HCT116 (cell line): ENCODE measurements at regions of chr4 and their contacts with region 1.

Region 1: GRCh38 chr4:6327041-6327917 is 57.6 kb downstream of the WFS1 start:
- DNase-seq: peak; percentile 48
- ATAC-seq: peak; percentile 84
- H3K4me3 ChIP-seq: no peak overlapping the region
- H3K27ac ChIP-seq: no peak overlapping the region
- H3K4me1 ChIP-seq: peaks cover 8 to 16% of the 10 kb centered on the region in 2 experiments
- H3K27me3 ChIP-seq: no peaks in the 10 kb centered on the region
- CTCF ChIP-seq: peak; percentile 87 to 90 (median 87)
- POLR2A ChIP-seq: no peak
- RAD21 ChIP-seq: peak; percentile 96

Region 2: GRCh38 chr4:5998333-5998936 is 328.8 kb before region 1 on chr4:
- CTCF ChIA-PET with region 1: interaction called, 12 read pairs
- POLR2A ChIA-PET with region 1: no interaction called
- RAD21 ChIA-PET with region 1: no interaction called
- intact Hi-C with region 1: loop called (anchors 1 kb)
- DNase-seq: peak; percentile 45
- ATAC-seq: peak; percentile 92
- H3K4me3 ChIP-seq: no peak overlapping the region
- H3K27ac ChIP-seq: no peak overlapping the region
- H3K4me1 ChIP-seq: peaks cover 0 to 7% of the 10 kb centered on the region in 2 experiments; a peak in 1 of 4 replicates
- H3K27me3 ChIP-seq: peaks cover 41% of the 10 kb centered on the region
- CTCF ChIP-seq: peak; percentile 97 to 99 (median 98)
- POLR2A ChIP-seq: no peak
- RAD21 ChIP-seq: peak; percentile 87

Region 3: DNA sequence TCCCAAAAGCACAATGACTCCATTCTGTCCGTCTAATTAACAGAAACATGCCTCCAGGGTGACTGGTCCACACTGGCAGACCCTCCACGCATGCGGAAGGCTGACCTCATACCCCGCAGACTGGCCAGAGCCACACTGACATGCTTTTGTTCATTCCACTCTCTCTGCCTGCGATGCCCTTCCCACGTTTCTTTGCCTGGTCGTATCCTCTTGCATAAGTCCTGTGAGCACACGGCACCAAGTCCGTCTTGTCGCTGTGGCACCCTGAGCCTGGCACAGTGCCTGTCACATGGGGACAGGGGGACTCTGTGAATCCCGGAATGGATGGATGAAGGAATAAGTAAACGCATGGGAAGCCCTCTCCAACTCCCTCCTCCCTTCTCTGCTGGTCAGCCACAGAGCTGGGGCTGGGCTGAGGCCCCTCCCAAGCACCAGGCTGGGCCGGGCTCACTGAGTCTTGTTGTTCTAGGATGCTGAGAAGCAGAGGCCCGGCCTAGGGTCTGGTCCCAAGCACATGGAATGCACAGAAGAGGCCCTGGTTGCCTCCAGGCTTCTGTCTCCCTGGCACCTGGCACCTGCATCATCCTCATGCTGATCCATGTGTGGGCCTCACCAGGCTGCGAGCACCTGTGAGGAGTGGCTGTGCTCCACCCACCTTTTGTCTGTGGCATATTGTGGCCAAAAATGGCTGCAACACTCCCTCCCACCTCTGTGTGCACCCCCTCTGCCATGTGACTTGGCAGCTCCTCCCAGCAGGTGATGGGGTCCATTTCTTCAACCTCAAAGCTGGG is 270.1 kb before region 1 on chr4:
- CTCF ChIA-PET with region 1: no interaction called
- POLR2A ChIA-PET with region 1: no interaction called
- RAD21 ChIA-PET with region 1: no interaction called
- intact Hi-C with region 1: no loop called
- DNase-seq: no peak
- ATAC-seq: no peak
- H3K4me3 ChIP-seq: no peak overlapping the region
- H3K27ac ChIP-seq: no peak overlapping the region
- H3K4me1 ChIP-seq: peaks cover 0 to 5% of the 10 kb centered on the region in 2 experiments; a peak in 2 of 4 replicates
- H3K27me3 ChIP-seq: peaks cover 8% of the 10 kb centered on the region; the same call in 1 of the 2 replicates
- CTCF ChIP-seq: no peak
- POLR2A ChIP-seq: no peak
- RAD21 ChIP-seq: no peak

Region 4: GRCh38 chr4:6250235-6250983 is 76.9 kb before region 1 on chr4:
- CTCF ChIA-PET with region 1: interaction called, 201 read pairs
- POLR2A ChIA-PET with region 1: no interaction called
- RAD21 ChIA-PET with region 1: interaction called, 20 to 26 read pairs
- intact Hi-C with region 1: loop called (anchors 1 kb)
- DNase-seq: peak; percentile 76
- ATAC-seq: peak; percentile 93
- H3K4me3 ChIP-seq: peak overlapping the region; percentile 30 to 44
- H3K27ac ChIP-seq: no peak overlapping the region
- H3K4me1 ChIP-seq: peaks cover 3 to 6% of the 10 kb centered on the region in 2 experiments; a peak in 3 of 4 replicates
- H3K27me3 ChIP-seq: no peaks in the 10 kb centered on the region
- CTCF ChIP-seq: peak; percentile 55 to 92 (median 85); a peak in 5 of 6 replicates
- POLR2A ChIP-seq: no peak
- RAD21 ChIP-seq: peak; percentile 83

Region 5: GRCh38 chr4:6343950-6344408 is 16.7 kb after region 1 on chr4:
- CTCF ChIA-PET with region 1: interaction called, 20 read pairs
- POLR2A ChIA-PET with region 1: no interaction called
- RAD21 ChIA-PET with region 1: no interaction called
- intact Hi-C with region 1: no loop called
- DNase-seq: peak; percentile 79
- ATAC-seq: peak; percentile 98
- H3K4me3 ChIP-seq: peak overlapping the region; percentile 8 to 35; a peak in 3 of 4 replicates
- H3K27ac ChIP-seq: peak overlapping the region; percentile 61
- H3K4me1 ChIP-seq: peaks cover 16 to 24% of the 10 kb centered on the region in 2 experiments
- H3K27me3 ChIP-seq: no peaks in the 10 kb centered on the region
- CTCF ChIP-seq: peak; percentile 36 to 67 (median 47); a peak in 5 of 6 replicates
- POLR2A ChIP-seq: no peak
- RAD21 ChIP-seq: peak; percentile 79

Region 6: GRCh38 chr4:6546681-6547447 is 219.6 kb after region 1 on chr4:
- CTCF ChIA-PET with region 1: interaction called, 26 read pairs
- POLR2A ChIA-PET with region 1: no interaction called
- RAD21 ChIA-PET with region 1: no interaction called
- intact Hi-C with region 1: loop called (anchors 1 kb)
- DNase-seq: peak; percentile 57
- ATAC-seq: peak; percentile 82
- H3K4me3 ChIP-seq: no peak overlapping the region
- H3K27ac ChIP-seq: no peak overlapping the region
- H3K4me1 ChIP-seq: peaks cover 0 to 3% of the 10 kb centered on the region in 2 experiments; a peak in 1 of 4 replicates
- H3K27me3 ChIP-seq: peaks cover 28% of the 10 kb centered on the region
- CTCF ChIP-seq: peak; percentile 87 to 97 (median 94)
- POLR2A ChIP-seq: no peak
- RAD21 ChIP-seq: peak; percentile 80